Colonic mucosa (tissue), 4 donors: ENCODE measurements at regions of chr3 and their contacts with region 1.

Region 1: GRCh38 chr3:194315088-194315964 is 35.8 kb downstream of the CPN2 start:
- DNase-seq: peak; percentile 88
- H3K4me3 ChIP-seq: peak overlapping the region; percentile 61
- H3K27ac ChIP-seq: peak overlapping the region; percentile 8
- H3K4me1 ChIP-seq: peaks cover 4% of the 10 kb centered on the region
- H3K27me3 ChIP-seq: no peaks in the 10 kb centered on the region
- CTCF ChIP-seq: peak; percentile 96

Region 2: GRCh38 chr3:193665370-193665989 is 649.8 kb before region 1 on chr3:
- intact Hi-C with region 1: loop called (anchors 5 kb)
- DNase-seq: no peak
- H3K4me3 ChIP-seq: no peak overlapping the region
- H3K27ac ChIP-seq: no peak overlapping the region
- H3K4me1 ChIP-seq: no peaks in the 10 kb centered on the region
- H3K27me3 ChIP-seq: no peaks in the 10 kb centered on the region
- CTCF ChIP-seq: peak; percentile 13

Region 3: GRCh38 chr3:193780810-193781472 is 534.4 kb before region 1 on chr3:
- intact Hi-C with region 1: loop called (anchors 2 kb)
- DNase-seq: peak; percentile 79
- H3K4me3 ChIP-seq: no peak overlapping the region
- H3K27ac ChIP-seq: no peak overlapping the region
- H3K4me1 ChIP-seq: no peaks in the 10 kb centered on the region
- H3K27me3 ChIP-seq: no peaks in the 10 kb centered on the region
- CTCF ChIP-seq: peak; percentile 57

Region 4: DNA sequence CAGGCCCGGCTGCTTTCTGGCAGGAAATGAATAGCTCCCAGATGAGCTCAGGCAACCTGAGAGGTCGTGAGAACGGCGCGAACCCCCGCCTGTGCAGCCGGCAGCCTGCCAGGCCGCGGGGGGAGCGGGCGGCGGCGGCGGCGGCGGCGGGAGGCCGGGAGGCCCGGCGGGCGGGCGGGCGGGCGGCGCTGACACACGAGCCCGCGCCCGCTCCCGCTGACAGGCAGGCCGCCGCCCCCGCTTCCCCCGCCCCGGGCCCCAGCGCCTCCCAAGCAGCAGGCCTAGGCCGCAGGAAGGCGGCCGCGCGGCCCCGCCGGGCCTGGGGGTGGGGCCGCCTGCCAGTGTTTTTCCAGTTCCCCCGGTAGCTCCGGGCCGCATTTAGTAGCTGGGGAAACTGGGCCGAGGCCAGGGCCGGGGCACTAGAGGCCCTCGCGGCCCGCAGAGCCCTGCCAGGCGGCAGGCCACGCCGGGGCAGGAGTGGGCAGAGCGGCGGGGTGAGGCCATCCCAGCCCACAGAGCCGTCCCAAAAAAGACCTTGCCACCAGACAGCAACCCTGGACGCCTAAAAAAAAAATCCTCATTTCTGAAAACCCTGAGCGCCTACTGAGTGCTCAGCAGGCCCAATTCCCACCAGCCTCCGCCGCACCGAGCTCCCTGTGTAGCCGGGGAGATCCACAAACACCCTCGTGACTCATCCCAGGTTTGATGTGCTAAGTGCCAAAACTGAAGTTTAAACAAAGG is 173.7 kb before region 1 on chr3:
- intact Hi-C with region 1: loop called (anchors 5 kb)
- DNase-seq: peak; percentile 91
- H3K4me3 ChIP-seq: no peak overlapping the region
- H3K27ac ChIP-seq: peak overlapping the region; percentile 90
- H3K4me1 ChIP-seq: peaks cover 6% of the 10 kb centered on the region
- H3K27me3 ChIP-seq: no peaks in the 10 kb centered on the region
- CTCF ChIP-seq: no peak

Region 5: DNA sequence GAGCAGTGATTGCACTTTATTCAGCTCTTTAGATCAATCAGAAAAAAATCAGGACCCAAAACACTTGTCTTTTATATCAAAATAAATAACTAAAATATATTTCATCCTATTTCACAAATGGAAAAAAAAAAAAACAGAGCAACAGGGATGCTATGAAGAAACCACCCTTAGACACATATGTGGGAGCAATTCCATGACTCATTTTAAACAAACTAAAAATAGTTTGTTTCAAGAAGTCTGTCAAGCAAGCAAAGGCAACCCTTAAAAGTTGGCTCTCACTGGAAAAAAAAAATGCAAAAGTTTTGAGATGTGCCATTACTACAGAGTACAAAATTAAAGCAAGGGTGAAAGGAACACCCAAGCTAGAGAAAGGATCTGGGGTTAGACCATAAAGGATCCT is 165.8 kb after region 1 on chr3:
- intact Hi-C with region 1: no loop called
- DNase-seq: no peak
- H3K4me3 ChIP-seq: no peak overlapping the region
- H3K27ac ChIP-seq: no peak overlapping the region
- H3K4me1 ChIP-seq: peaks cover 5% of the 10 kb centered on the region
- H3K27me3 ChIP-seq: no peaks in the 10 kb centered on the region
- CTCF ChIP-seq: no peak